AG04450 (cell line): ENCODE measurements at regions of chr5 and their contacts with region 1.

Region 1: DNA sequence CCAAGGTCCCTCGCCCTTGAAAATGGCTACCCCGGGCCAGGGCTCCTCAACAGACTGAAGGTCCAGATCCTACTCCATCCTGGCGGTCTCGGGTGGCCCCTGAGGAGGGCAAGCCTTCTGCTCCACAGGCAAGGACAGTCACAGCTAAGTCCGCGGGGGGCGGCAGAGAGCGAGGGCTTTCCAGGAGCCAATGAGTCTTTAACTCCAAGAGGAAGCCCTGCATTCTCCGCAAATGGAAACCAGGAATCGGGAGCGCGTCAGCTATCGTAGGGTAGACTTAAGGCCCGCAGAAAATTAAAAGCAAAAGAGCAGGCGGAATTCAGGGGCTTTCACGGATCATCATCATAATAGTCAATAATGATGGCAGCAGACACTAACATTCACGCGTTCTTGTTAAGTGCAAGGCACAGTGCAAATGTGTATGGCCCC is 87.8 kb upstream of the TNFAIP8 start:
- DNase-seq: peak; percentile 90
- H3K4me3 ChIP-seq: peak overlapping the region; percentile 74
- H3K27ac ChIP-seq: peak overlapping the region; percentile 66
- H3K27me3 ChIP-seq: no peaks in the 10 kb centered on the region
- CTCF ChIP-seq: peak; percentile 74

Region 2: DNA sequence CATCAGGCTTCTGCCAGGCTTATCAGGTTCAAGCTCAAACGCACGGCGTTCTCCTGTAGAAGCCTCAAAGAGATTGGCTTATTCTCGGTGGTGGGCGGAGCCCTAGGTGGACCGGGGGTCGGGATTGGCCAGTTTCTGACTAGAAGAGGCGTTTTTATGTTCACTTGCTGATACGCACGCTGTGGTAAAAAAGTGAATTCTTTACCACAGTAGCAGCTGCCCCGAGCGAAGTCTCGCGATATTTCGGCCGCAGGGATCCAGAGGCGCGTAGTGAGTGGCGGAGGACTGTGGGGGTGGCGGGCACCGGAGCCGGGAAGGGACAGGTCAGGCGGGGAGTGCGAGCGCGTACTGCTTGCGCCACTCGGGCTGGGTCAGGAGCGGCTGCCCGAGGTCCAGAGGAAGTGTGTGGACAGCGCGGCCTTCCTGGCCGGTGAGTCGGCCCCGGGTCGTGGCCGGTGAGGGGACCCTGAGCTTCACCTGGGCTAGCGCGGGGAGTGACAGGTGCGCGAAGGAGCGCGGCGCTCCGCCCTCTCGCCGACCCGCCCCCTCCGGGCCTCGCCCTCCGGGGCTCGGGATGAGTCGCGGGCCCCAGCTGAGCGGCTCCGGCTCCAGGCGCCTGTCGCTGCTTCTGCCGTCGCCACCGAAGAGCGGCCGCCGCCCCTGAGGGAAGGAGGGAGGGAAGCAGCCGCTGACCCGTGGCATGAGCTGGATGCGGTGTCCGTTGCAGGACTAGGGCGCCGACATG is 197.0 kb before region 1 on chr5 and contains the start of gene DMXL1:
- CTCF ChIA-PET with region 1: no interaction called
- POLR2A ChIA-PET with region 1: interaction called, 10 read pairs
- DNase-seq: peak; percentile 99
- H3K4me3 ChIP-seq: peak within 1 kb of the TSS; percentile 97
- H3K27ac ChIP-seq: peak within 1 kb of the TSS; percentile 92
- H3K27me3 ChIP-seq: no peaks in the 10 kb centered on the region
- CTCF ChIP-seq: no peak
- polyA plus RNA-seq, gene DMXL1: 14.7 and 22.2 TPM in 2 replicates